ENCODE measurements at regions of chr20 and their contacts with region 1.

Region 1: GRCh38 chr20:58907399-58908137 is 55.1 kb downstream of the GNAS start:
- DNase-seq: peak; percentile 96 to 98
- ATAC-seq: peak; percentile 95 to 96
- H3K4me3 ChIP-seq: peak overlapping the region; percentile 32 to 40 (median 34)
- H3K27ac ChIP-seq: peak overlapping the region; percentile 84 to 99 (median 96)
- H3K4me1 ChIP-seq: peaks cover 30 to 54% of the 10 kb centered on the region in 2 donors
- H3K27me3 ChIP-seq: no peaks in the 10 kb centered on the region
- CTCF ChIP-seq: no peak
- POLR2A ChIP-seq: peak; percentile 56 to 77

Region 2: GRCh38 chr20:58670102-58670501 is 237.5 kb before region 1 on chr20:
- in situ Hi-C with region 1: no loop called
- intact Hi-C with region 1: no loop called
- DNase-seq: no peak
- ATAC-seq: no peak
- H3K4me3 ChIP-seq: no peak overlapping the region
- H3K27ac ChIP-seq: no peak overlapping the region
- H3K4me1 ChIP-seq: peaks cover 0 to 5% of the 10 kb centered on the region in 2 donors
- H3K27me3 ChIP-seq: no peaks in the 10 kb centered on the region
- CTCF ChIP-seq: no peak
- POLR2A ChIP-seq: no peak

Region 3: DNA sequence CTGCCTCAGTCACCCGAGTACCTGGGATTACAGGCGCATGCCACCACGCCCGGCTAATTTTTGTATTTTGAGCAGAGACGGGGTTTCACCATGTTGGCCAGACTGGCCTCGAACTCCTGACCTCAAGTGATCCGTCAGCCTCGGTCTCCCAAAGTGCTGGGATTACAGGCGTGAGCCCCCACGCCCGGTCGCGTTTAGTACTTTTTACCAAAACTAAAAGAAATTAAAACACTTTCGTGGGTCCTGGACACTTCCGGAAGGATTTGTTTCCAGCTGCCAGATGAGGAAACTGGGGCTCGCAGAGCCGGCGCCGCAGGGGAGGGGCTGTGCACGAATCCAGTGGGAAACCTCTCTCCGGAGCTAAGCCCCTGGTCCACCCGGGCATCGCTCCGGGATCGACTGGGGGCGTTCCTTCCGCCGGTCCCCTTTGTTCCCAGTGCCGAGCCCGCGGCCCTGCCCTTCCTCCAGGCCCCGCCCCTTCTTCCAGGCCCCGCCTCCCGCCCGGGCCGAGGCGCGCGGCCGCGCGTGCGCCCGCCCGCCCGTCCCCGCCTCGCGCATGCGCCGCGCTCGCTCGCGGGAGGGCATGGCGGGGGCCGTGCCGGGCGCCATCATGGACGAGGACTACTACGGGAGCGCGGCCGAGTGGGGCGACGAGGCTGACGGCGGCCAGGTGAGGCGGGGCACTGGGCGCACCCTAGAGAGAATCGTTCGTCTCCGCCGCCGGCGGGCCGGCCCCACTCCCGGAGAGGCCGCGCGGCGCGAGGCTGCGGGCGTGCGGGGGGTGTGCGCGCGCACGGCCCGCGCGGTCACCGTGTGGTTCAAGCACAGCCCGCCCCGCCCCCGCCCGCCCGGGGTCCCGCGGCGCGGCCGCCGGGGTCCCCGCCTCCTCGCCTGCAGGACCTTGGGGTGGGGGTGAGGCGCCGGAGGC is 73.4 kb after region 1 on chr20 and contains the start of gene NELFCD:
- in situ Hi-C with region 1: no loop called
- intact Hi-C with region 1: loop called (anchors 1 kb)
- DNase-seq: peak; percentile 72 to 82
- ATAC-seq: peak; percentile 89 to 92
- H3K4me3 ChIP-seq: peak within 1 kb of the TSS; percentile 90 to 100 (median 95)
- H3K27ac ChIP-seq: peak within 1 kb of the TSS; percentile 83 to 92 (median 90)
- H3K4me1 ChIP-seq: peaks cover 32 to 38% of the 10 kb centered on the region in 2 donors
- H3K27me3 ChIP-seq: no peaks in the 10 kb centered on the region
- CTCF ChIP-seq: no peak
- POLR2A ChIP-seq: peak; percentile 80
- total RNA-seq, gene NELFCD: 37.8 to 44.3 (median 40.9) TPM